ENCODE measurements at regions of chr6 and their contacts with region 1.

Region 1: DNA sequence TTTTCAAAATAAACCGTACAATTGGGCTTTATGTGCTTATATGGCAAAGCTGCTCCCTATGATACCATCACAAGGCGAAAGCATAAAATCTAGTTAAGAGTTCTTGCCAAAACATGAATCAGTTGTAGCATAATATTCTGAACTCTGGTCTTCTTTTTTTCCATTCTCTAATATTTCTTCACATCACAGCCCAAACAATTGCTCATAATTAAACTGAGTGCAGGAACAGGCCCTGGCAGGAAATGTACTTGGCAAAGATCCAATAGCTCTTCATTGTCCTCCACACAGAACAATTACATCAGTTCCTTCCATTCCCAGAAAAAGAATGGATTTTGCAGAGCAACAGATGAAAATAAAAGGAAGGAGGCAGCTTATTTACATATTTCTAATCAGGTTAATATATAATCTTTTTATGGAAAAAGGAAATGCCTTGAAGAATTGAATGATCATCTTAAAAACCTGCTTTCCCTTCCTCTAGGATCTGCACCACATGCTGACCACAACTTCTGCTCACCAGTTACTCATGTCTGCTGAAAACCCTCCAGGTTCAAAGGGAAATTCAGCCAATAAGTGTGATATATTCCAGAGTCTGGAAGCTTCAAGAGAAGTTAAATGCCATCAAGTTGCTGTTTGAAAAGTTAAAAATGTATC is 123.3 kb upstream of the COL21A1 start:
- DNase-seq: no peak
- H3K4me3 ChIP-seq: peak overlapping the region; percentile 30
- H3K27ac ChIP-seq: peak overlapping the region; percentile 89
- H3K4me1 ChIP-seq: peaks cover 85% of the 10 kb centered on the region
- H3K27me3 ChIP-seq: no peaks in the 10 kb centered on the region
- CTCF ChIP-seq: no peak

Region 2: GRCh38 chr6:56279346-56280080 is 91.2 kb before region 1 on chr6:
- intact Hi-C with region 1: no loop called
- DNase-seq: no peak
- H3K4me3 ChIP-seq: no peak overlapping the region
- H3K27ac ChIP-seq: no peak overlapping the region
- H3K4me1 ChIP-seq: no peaks in the 10 kb centered on the region
- H3K27me3 ChIP-seq: no peaks in the 10 kb centered on the region
- CTCF ChIP-seq: no peak

Region 3: DNA sequence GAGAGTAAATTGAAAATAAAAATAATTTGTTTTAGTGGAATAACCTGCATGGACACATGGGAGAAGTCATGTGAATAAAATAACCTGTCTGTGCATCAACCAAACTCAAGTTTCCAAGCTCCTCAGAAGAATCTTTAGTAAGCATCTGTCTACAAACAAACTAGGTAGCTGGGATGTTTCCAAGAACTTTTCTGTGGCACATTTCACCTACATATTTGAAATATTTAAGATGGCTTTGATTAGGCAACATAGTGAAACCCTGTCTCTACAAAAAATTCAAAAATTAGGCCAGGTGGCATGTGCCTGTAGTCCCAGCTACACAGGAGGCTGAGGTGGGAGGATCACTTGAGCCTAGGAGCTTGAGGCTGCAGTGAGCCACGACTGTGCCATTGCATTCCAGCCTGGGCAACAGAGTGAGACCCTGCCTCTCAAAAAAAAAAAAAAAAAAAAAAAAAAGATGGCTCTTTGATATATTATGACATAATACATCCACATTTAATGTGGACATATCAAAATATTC is 103.9 kb after region 1 on chr6:
- intact Hi-C with region 1: no loop called
- DNase-seq: no peak
- H3K4me3 ChIP-seq: no peak overlapping the region
- H3K27ac ChIP-seq: no peak overlapping the region
- H3K4me1 ChIP-seq: peaks cover 34% of the 10 kb centered on the region
- H3K27me3 ChIP-seq: no peaks in the 10 kb centered on the region
- CTCF ChIP-seq: no peak

Region 4: DNA sequence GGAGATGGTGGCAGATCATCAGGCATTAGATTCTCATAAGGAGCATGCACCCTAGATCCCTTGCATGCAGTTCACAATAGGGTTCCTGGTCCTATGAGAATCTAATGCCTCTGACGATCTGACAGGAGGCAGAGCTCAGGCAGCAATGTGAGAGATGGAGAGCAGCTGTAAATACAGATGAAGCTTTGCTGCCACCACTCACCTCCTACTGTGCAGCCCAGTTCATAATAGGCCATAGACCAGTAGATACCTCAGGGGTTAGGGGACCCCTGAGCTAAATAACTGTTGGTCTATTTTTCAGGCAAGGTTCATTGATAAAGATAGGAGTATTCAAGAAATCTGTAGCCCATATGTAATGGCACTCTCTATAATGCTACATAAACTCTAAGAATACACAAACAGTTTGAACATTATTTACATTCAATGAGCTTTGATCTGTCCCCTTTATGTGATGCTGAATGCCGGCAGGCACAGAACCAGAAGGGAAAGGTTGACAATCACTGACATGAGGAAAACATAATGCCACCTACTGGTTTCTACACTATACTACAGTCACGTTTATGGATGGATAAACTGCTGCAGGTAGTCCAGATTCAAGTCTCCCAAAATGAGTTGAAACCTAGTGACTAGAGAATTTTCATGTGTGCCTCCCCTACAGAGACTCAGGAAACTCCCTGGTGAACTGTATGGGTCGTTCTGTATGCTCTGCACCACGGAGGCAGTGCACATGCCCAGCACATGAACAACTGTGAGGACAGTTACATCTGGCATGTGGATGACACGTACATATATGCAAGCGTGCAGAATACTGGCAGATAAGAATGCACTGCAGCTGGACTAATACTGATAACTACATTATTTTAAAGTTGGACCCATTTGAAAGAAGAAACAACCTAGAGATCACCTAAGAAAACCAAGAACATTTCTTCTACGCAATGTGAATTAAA is 200.0 kb after region 1 on chr6:
- intact Hi-C with region 1: loop called (anchors 5 kb)
- DNase-seq: no peak
- H3K4me3 ChIP-seq: no peak overlapping the region
- H3K27ac ChIP-seq: no peak overlapping the region
- H3K4me1 ChIP-seq: peaks cover 57% of the 10 kb centered on the region
- H3K27me3 ChIP-seq: no peaks in the 10 kb centered on the region
- CTCF ChIP-seq: peak; percentile 74

Measured in left ventricle myocardium inferior (tissue), 1 donor.